ENCODE measurements at regions of chr14 and their contacts with region 1.

Region 1: GRCh38 chr14:74945823-74946682 is 9.3 kb downstream of the PGF start:
- DNase-seq: peak; percentile 86
- H3K4me3 Mint-ChIP-seq: no peak overlapping the region
- H3K27ac Mint-ChIP-seq: no peak overlapping the region
- H3K4me1 Mint-ChIP-seq: peaks cover 12% of the 10 kb centered on the region
- H3K27me3 Mint-ChIP-seq: no peaks in the 10 kb centered on the region
- CTCF ChIP-seq: peak; percentile 85

Region 2: DNA sequence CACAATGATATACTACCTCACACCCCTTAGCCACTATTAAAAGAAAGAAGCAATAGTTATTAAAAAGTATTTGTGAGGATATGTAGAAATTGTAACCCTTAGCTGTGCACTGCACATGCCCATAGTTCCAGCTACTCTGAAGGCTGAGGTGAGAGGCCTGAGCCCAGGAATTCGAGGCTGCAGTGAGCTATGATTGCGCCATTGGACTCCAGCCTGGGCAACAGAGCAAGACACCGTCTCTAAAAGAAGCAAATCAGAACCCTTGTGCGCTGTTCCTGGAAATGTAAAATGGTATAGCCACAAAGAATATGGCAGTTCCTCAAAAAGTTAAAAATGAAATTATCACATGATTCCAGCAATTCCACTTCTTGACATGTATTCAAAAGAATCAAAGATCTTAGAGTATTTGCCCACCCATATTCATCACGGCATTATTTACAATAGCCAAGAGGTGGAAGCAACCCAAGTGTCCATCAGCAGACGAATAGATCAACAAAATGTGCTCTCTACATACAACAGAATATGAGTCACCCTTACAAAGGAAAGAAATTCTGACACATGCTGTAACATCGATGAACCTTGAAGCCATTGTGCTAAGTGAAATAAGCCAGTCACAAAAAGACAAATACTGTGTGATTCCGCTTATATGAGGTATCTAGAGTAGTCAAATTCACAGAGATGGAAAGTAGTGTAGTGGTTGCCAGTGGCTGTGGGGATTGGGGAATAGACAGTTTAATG is 206.6 kb before region 1 on chr14:
- CTCF ChIA-PET with region 1: no interaction called
- intact Hi-C with region 1: no loop called
- DNase-seq: no peak
- H3K4me3 Mint-ChIP-seq: no peak overlapping the region
- H3K27ac Mint-ChIP-seq: no peak overlapping the region
- H3K4me1 Mint-ChIP-seq: no peaks in the 10 kb centered on the region
- H3K27me3 Mint-ChIP-seq: no peaks in the 10 kb centered on the region
- CTCF ChIP-seq: no peak

Region 3: GRCh38 chr14:74922739-74923401 is 23.2 kb before region 1 on chr14 and contains the start of gene RPS6KL1:
- CTCF ChIA-PET with region 1: interaction called, 10 read pairs
- intact Hi-C with region 1: no loop called
- DNase-seq: peak; percentile 84
- H3K4me3 Mint-ChIP-seq: peak within 1 kb of the TSS; percentile 73
- H3K27ac Mint-ChIP-seq: peak within 1 kb of the TSS; percentile 37
- H3K4me1 Mint-ChIP-seq: no peaks in the 10 kb centered on the region
- H3K27me3 Mint-ChIP-seq: no peaks in the 10 kb centered on the region
- CTCF ChIP-seq: no peak
- total RNA-seq, gene RPS6KL1: 16.4 and 18.5 TPM in 2 replicates

Region 4: GRCh38 chr14:75002392-75003249 is 56.6 kb after region 1 on chr14 and contains the start of gene EIF2B2:
- CTCF ChIA-PET with region 1: interaction called, 12 read pairs
- intact Hi-C with region 1: loop called (anchors 5 kb)
- DNase-seq: peak; percentile 98
- H3K4me3 Mint-ChIP-seq: peak within 1 kb of the TSS; percentile 85
- H3K27ac Mint-ChIP-seq: peak within 1 kb of the TSS; percentile 77
- H3K4me1 Mint-ChIP-seq: peaks cover 28% of the 10 kb centered on the region
- H3K27me3 Mint-ChIP-seq: no peaks in the 10 kb centered on the region
- CTCF ChIP-seq: no peak
- total RNA-seq, gene EIF2B2: 41.2 and 42.9 TPM in 2 replicates